ENCODE measurements at regions of chr15 and their contacts with region 1.

Region 1: GRCh38 chr15:43329960-43330779 is at the start of gene LCMT2:
- DNase-seq: peak; percentile 91 to 95
- ATAC-seq: peak; percentile 96 to 98 (median 98)
- H3K4me3 ChIP-seq: peak within 1 kb of the TSS; percentile 58 to 87 (median 77)
- H3K27ac ChIP-seq: peak within 1 kb of the TSS; percentile 72 to 98 (median 94)
- H3K4me1 ChIP-seq: peaks cover 4 to 50% (median 33%) of the 10 kb centered on the region in 9 donors
- H3K27me3 ChIP-seq: no peaks in the 10 kb centered on the region
- CTCF ChIP-seq: peak in 1 of 9 donors; percentile 6
- total RNA-seq, gene LCMT2: 5.2 to 8.7 (median 6.2) TPM

Region 2: GRCh38 chr15:43370975-43371974 is 41.1 kb after region 1 on chr15 and contains the starts of genes TUBGCP4 and ZSCAN29:
- intact Hi-C with region 1: loop called in 2 of 10 experiments (anchors 5 kb)
- DNase-seq: peak; percentile 75 to 87
- ATAC-seq: peak; percentile 95 to 98 (median 96)
- H3K4me3 ChIP-seq: peak within 1 kb of the TSS; percentile 59 to 100 (median 94)
- H3K27ac ChIP-seq: peak within 1 kb of the TSS; percentile 9 to 92 (median 79)
- H3K4me1 ChIP-seq: peaks cover 10 to 44% (median 27%) of the 10 kb centered on the region in 9 donors
- H3K27me3 ChIP-seq: no peaks in the 10 kb centered on the region
- CTCF ChIP-seq: peak in 5 of 9 donors; percentile 18 to 42 (median 33)
- total RNA-seq, gene TUBGCP4: 9.0 to 14.9 (median 12.1) TPM
- total RNA-seq, gene ZSCAN29: 9.6 to 15.7 (median 12.2) TPM

Measured in heart right ventricle (tissue), 16 donors.